Breast epithelium (tissue), 4 donors: ENCODE measurements at regions of chr3 and their contacts with region 1.

Region 1: DNA sequence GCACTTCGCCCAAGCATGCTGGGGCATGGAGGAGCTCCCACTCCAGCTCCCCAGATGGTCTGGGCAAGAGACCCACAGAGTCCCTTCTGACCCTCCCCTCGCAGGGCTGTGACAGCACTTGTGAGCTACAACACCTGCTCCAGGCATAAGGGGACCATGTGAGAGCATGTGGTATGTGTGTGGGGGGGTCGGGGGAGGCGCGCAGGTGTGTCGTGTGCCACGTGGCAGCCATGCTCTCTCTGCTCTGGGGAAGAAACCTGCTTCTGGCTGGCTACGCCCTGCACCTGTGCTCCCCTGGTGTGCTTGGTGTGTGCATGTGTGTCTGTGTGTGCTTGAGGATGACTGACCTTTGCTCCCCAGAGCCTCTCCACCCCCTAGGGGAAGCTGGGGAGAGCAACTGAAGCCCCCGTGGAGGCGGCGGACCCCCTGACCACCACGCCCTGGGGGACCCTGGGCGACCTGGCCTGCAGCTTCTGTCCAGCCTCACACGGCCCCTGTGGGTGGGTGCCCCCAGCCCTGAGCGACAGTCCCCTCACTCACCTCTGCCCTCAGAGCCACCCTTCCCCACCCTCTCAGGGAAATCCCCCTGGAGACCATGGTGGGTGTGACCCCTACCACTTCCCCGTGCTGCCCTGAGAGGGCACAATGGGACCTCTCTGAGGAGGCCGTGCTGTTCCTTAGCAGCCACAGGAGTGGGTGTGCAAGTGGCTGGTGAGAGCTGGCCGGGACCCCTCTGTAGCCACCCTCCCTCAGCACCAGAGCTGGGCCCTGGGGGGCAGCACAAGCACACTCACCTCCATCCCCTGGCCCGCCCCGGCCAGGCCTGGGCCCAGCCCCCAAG is 16.6 kb upstream of the SEC13 start:
- DNase-seq: no peak
- H3K4me3 ChIP-seq: no peak overlapping the region
- H3K27ac ChIP-seq: no peak overlapping the region
- H3K4me1 ChIP-seq: no peaks in the 10 kb centered on the region
- H3K27me3 ChIP-seq: no peaks in the 10 kb centered on the region
- CTCF ChIP-seq: no peak
- POLR2A ChIP-seq: no peak

Region 2: DNA sequence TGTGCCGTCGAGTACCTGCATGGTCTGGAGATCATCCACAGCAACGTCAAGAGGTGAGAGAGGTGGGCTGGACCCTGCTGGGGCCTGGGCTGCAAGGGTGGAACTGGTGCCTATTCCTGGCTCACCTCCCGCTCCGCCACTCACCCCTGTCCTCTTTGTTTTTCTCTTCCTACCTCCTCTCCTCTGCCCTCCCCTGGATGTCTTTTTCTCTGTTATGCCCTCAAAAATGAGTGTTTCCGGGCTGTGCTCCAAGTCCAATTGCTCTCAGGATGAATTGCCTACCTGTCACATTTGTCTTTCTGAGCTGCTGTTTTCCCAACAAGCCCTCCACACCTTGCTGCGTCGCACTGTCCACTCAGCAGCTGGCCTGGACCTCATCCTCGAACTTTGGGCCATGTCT is 117.8 kb before region 1 on chr3:
- intact Hi-C with region 1: loop called (anchors 5 kb)
- DNase-seq: no peak
- H3K4me3 ChIP-seq: no peak overlapping the region
- H3K27ac ChIP-seq: no peak overlapping the region
- H3K4me1 ChIP-seq: no peaks in the 10 kb centered on the region
- H3K27me3 ChIP-seq: no peaks in the 10 kb centered on the region
- CTCF ChIP-seq: no peak
- POLR2A ChIP-seq: no peak